ENCODE measurements at regions of chr16 and their contacts with region 1.

Region 1: GRCh38 chr16:57196286-57196685 is 10.2 kb downstream of the RSPRY1 start:
- DNase-seq: no peak
- ATAC-seq: no peak
- H3K4me3 ChIP-seq: no peak overlapping the region
- H3K27ac ChIP-seq: no peak overlapping the region
- H3K4me1 ChIP-seq: peaks cover 0 to 61% (median 35%) of the 10 kb centered on the region in 9 donors
- H3K27me3 ChIP-seq: no peaks in the 10 kb centered on the region
- CTCF ChIP-seq: no peak

Region 2: DNA sequence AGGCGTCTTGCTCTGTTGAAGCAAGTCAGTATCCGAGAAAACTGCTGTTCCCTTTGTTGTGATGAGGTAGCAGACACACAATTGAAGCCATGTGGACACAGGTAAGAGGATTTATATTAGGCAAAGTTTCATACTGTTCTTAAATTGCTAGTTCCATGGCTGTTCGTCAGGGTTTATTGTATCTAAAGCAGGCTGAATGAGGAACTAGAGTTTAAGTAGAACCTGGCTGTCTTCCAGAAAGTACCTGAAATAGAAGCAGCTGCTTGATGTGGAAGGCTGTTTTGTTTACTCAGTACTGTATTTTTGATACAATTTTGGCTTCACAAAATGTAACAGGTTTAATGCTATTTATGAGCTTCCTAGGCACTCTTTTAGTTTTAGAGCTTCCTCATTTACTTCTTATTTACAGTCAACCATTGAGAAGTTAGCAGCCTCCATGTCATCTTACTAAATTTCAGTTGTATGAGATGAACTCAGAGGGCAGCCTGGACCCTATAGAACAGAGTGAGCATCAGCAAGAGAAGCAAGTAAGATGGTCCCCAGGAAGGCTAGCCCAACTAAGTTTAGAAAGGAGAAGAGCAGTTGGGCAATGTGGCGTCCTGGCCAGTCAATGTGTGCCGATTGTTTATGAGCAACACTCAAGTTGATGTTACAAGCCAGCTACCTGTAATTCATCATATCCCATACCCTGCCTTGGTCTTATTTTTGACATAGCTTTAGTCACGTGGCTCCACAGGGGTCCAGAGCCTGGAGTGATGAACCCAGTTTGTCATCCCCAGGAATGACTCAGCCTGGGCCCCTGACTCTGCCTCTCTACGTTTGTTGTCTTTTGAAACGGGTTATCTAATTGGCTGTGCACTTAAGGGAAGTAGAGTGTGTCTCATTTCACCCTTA is 39.1 kb after region 1 on chr16:
- intact Hi-C with region 1: loop called in 1 of 10 experiments (anchors 5 kb)
- DNase-seq: no peak
- ATAC-seq: peak in 4 of 8 donors; percentile 26 to 56 (median 37)
- H3K4me3 ChIP-seq: no peak overlapping the region
- H3K27ac ChIP-seq: peak overlapping the region in 2 of 10 donors; percentile 69 to 79
- H3K4me1 ChIP-seq: peaks cover 0 to 21% (median 7%) of the 10 kb centered on the region in 9 donors
- H3K27me3 ChIP-seq: no peaks in the 10 kb centered on the region
- CTCF ChIP-seq: no peak

Region 3: GRCh38 chr16:57403965-57404817 is 207.9 kb after region 1 on chr16 and contains the start of gene CCL17:
- intact Hi-C with region 1: no loop called
- DNase-seq: no peak
- ATAC-seq: no peak
- H3K4me3 ChIP-seq: no peak within 1 kb of the TSS
- H3K27ac ChIP-seq: no peak within 1 kb of the TSS
- H3K4me1 ChIP-seq: peaks cover 0 to 10% (median 5%) of the 10 kb centered on the region in 9 donors
- H3K27me3 ChIP-seq: no peaks in the 10 kb centered on the region
- CTCF ChIP-seq: no peak
- total RNA-seq, gene CCL17: 1.0 TPM in 1 of 10 donors, not detected in the others